Astrocyte of the cerebellum (primary cell): ENCODE measurements at regions of chr16 and their contacts with region 1.

Region 1: GRCh38 chr16:28196331-28196987 is 15.3 kb downstream of the XPO6 start:
- DNase-seq: no peak
- H3K4me3 ChIP-seq: no peak overlapping the region
- CTCF ChIP-seq: no peak

Region 2: GRCh38 chr16:28117168-28117565 is 79.3 kb before region 1 on chr16:
- in situ Hi-C with region 1: loop called (anchors 5 kb)
- DNase-seq: no peak
- H3K4me3 ChIP-seq: no peak overlapping the region
- CTCF ChIP-seq: no peak